HEK293T (cell line): ENCODE measurements at regions of chr16 and their contacts with region 1.

Region 1: GRCh38 chr16:15542261-15542660 is 100.7 kb downstream of the MARF1 start:
- DNase-seq: no peak

Region 2: DNA sequence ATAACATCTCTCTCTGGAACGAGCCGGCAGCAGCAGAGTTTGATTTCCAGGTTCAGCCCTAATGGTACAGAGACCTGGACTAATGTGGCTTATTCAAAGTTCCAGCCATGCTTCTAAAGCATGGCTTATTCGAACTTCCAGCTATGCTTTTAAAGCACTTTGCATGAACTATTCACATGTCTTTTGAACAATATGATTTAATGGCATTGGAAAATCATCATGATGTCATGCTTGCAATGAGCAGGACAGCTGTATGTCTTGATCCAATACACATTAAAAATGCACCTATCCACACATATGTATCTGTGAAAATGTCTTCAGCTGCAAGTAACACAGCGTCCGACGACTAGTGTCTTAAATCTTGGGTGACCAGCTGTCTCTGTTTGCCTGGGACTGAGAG is 15.0 kb after region 1 on chr16:
- CTCF ChIA-PET with region 1: interaction called, 11 read pairs
- POLR2A ChIA-PET with region 1: no interaction called
- DNase-seq: no peak